Psoas muscle (tissue), 8 donors: ENCODE measurements at regions of chr5 and their contacts with region 1.

Region 1: GRCh38 chr5:96868603-96869371 is 7.5 kb upstream of the ERAP2 start:
- DNase-seq: no peak
- ATAC-seq: peak; percentile 94 to 99 (median 96)
- H3K4me3 ChIP-seq: no peak overlapping the region
- H3K27ac ChIP-seq: no peak overlapping the region
- H3K4me1 ChIP-seq: peaks cover 4% of the 10 kb centered on the region
- H3K27me3 ChIP-seq: no peaks in the 10 kb centered on the region
- CTCF ChIP-seq: peak; percentile 97

Region 2: DNA sequence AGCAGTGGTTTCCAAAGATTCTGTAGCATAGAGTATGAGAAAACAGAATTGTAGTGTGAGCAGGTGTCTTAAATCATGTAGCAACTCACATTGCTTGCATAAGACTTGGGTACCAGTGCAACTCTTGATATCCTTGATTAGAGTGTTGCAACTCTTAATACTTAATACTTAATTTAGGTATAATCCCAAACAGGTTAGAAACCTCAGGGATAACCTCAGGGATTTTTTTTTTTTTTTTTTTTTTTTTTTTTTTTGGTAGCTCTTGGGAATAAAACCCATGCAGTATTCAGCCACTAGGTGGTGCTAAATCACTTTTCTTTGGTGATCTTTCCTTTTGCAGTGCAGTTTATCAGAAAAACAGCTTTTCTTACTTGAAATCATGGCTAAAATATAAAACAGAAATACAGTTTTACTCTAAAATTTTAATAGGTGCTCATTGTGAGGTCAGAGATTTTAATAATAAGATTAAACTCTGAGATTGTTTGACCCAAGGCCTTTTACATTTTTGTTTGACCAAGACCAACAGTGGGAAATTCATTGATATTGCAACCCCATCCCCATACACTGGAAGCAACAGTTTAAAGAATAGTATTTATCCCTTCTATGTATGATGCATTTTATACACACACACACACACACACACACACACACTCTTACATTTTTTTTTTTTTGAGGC is 116.3 kb before region 1 on chr5:
- intact Hi-C with region 1: loop called in 1 of 2 experiments (anchors 5 kb)
- DNase-seq: no peak
- ATAC-seq: peak in 1 of 4 donors; percentile 30
- H3K4me3 ChIP-seq: no peak overlapping the region
- H3K27ac ChIP-seq: peak overlapping the region; percentile 41
- H3K4me1 ChIP-seq: peaks cover 4% of the 10 kb centered on the region
- H3K27me3 ChIP-seq: no peaks in the 10 kb centered on the region
- CTCF ChIP-seq: peak; percentile 69

Region 3: GRCh38 chr5:96781031-96781937 is 87.5 kb before region 1 on chr5:
- intact Hi-C with region 1: no loop called
- DNase-seq: no peak
- ATAC-seq: peak in 1 of 4 donors; percentile 11
- H3K4me3 ChIP-seq: no peak overlapping the region
- H3K27ac ChIP-seq: no peak overlapping the region
- H3K4me1 ChIP-seq: peaks cover 6% of the 10 kb centered on the region
- H3K27me3 ChIP-seq: no peaks in the 10 kb centered on the region
- CTCF ChIP-seq: no peak

Region 4: GRCh38 chr5:96807075-96807654 is 61.6 kb before region 1 on chr5:
- intact Hi-C with region 1: loop called in 1 of 2 experiments (anchors 5 kb)
- DNase-seq: peak; percentile 88 to 93
- ATAC-seq: peak; percentile 79 to 86 (median 82)
- H3K4me3 ChIP-seq: peak overlapping the region; percentile 92
- H3K27ac ChIP-seq: peak overlapping the region; percentile 99
- H3K4me1 ChIP-seq: peaks cover 18% of the 10 kb centered on the region
- H3K27me3 ChIP-seq: no peaks in the 10 kb centered on the region
- CTCF ChIP-seq: no peak

Region 5: DNA sequence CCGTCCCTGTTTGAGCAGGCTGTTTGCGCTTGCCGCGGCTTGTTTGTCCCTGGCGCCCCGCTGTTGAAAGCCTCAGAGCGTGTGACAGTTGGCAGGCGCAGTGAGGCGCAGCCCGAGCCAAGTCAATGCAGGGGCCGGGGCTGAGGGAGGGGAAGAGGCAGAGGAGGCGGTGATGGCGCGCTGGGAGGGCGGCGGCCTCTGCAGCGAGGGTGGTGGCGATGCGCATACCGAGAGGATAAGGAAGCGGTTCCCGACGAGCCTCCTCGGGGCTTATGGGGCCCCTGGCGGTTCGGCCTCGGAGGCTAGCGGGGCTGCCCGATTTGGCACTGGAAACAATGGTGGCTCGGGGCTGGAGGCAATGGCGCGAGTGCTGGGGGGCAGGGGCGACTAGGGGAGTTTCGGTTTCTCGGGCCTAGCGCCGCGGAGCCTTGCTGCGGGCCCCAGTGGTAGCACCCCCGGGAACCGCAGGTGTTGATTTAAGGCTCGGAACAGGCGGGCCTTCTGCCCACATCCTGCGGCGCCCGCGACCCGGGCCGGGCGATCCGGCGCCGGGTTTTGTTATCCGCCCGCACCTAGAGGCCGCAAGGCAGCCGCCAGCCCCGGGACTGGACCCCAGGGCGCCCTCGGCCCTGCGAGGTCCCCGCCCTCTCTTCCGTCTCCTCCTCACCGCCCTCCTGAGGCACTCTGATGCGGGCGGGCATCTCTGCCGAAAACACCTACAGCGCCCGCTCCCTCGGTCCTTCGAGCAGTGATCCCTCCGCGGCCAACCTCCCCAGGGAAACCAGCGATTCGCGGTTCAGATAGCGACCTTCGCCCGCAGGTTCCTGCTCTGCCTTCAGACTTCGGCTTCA is 66.1 kb after region 1 on chr5:
- intact Hi-C with region 1: loop called (anchors 5 kb)
- DNase-seq: peak; percentile 92 to 96
- ATAC-seq: peak; percentile 81 to 86 (median 84)
- H3K4me3 ChIP-seq: peak overlapping the region; percentile 94
- H3K27ac ChIP-seq: peak overlapping the region; percentile 99
- H3K4me1 ChIP-seq: peaks cover 57% of the 10 kb centered on the region
- H3K27me3 ChIP-seq: no peaks in the 10 kb centered on the region
- CTCF ChIP-seq: no peak

Region 6: DNA sequence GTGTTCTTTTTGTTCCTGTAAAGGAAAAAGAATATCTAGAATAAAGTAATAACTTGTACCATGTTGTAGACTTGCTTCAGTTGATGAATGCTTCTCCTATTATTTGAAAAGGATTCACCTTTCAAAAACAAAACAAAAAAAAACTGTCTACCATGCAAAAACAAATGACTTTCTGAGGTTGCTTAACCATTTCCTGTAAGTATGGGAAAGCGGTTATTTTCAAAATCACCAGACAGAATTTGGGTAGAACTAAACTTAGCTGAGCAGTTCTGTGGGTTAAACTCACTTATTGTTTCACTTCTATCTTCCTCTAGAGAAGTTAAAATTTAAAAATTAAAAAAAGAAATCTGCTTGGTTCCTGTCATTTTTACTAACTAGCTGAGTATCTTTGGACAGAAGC is 92.3 kb after region 1 on chr5:
- intact Hi-C with region 1: no loop called
- DNase-seq: no peak
- ATAC-seq: no peak
- H3K4me3 ChIP-seq: no peak overlapping the region
- H3K27ac ChIP-seq: no peak overlapping the region
- H3K4me1 ChIP-seq: peaks cover 54% of the 10 kb centered on the region
- H3K27me3 ChIP-seq: no peaks in the 10 kb centered on the region
- CTCF ChIP-seq: no peak